Transverse colon (tissue), 4 donors: ENCODE measurements at regions of chr1 and their contacts with region 1.

Region 1: GRCh38 chr1:89987170-89987819 is 7.6 kb upstream of the ZNF326 start:
- DNase-seq: peak; percentile 58
- H3K4me3 ChIP-seq: no peak overlapping the region
- H3K27ac ChIP-seq: no peak overlapping the region
- H3K4me1 ChIP-seq: peaks cover 0 to 45% (median 15%) of the 10 kb centered on the region in 4 donors
- H3K27me3 ChIP-seq: no peaks in the 10 kb centered on the region
- CTCF ChIP-seq: peak; percentile 82 to 88 (median 86)
- EP300 ChIP-seq: no peak
- POLR2A ChIP-seq: no peak

Region 2: DNA sequence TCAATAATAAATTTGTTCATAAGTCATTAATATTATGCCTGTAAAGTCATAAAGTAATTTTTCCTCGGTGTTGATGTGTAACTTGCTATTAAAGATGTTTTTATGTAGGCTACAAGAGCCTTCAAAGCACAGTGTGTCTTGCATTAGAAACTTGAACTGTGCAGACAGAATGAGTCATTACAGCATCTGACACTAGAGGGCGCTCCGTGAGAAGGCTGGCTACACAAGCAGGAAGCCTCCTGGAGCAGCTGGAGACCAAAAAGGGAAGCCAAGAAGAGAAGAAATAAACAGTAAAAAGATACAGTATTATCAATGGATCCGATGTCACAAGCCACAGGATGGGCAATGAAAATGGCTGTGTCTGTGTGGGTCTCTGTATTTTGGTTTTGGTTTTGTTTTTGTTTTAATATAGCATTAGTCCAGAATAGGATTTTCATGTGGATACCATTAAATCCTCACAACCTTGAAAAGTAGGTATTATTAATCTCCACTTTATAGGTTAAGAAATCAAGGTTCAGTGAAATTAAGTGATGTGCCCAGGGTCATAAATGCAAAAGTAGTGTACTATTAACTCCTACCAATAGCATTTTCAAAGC is 182.6 kb before region 1 on chr1:
- in situ Hi-C with region 1: loop called (anchors 5 to 10 kb)
- intact Hi-C with region 1: loop called (anchors 2 kb)
- DNase-seq: peak; percentile 91
- H3K4me3 ChIP-seq: no peak overlapping the region
- H3K27ac ChIP-seq: no peak overlapping the region
- H3K4me1 ChIP-seq: peaks cover 0 to 2% (median 0%) of the 10 kb centered on the region in 4 donors
- H3K27me3 ChIP-seq: no peaks in the 10 kb centered on the region
- CTCF ChIP-seq: peak; percentile 83 to 91 (median 88)
- EP300 ChIP-seq: no peak
- POLR2A ChIP-seq: no peak

Region 3: GRCh38 chr1:90236493-90236892 is 249.2 kb after region 1 on chr1:
- in situ Hi-C with region 1: no loop called
- intact Hi-C with region 1: no loop called
- DNase-seq: no peak
- H3K4me3 ChIP-seq: no peak overlapping the region
- H3K27ac ChIP-seq: no peak overlapping the region
- H3K4me1 ChIP-seq: no peaks in the 10 kb centered on the region
- H3K27me3 ChIP-seq: no peaks in the 10 kb centered on the region
- CTCF ChIP-seq: no peak
- EP300 ChIP-seq: no peak
- POLR2A ChIP-seq: no peak